Activated T-helper 1 cell treated with anti-CD3 and anti-CD28 coated beads, Interleukin-12 subunit alpha, Interleukin-12 subunit beta, Interleukin-2, Interleukin-4 antibody, amounts not matched to agents 30 ng/mL and 10 ng/mL and 1 ng/mL, durations not matched to agents 14 hours and 24 hours and 36 hours (primary cell): ENCODE measurements at regions of chr12 and their contacts with region 1.

Region 1: GRCh38 chr12:121697098-121697698 is 15.4 kb upstream of the TMEM120B start:
- DNase-seq: peak; percentile 24
- H3K4me3 Mint-ChIP-seq: no peak overlapping the region
- H3K27ac Mint-ChIP-seq: no peak overlapping the region
- H3K4me1 Mint-ChIP-seq: no peaks in the 10 kb centered on the region
- H3K27me3 Mint-ChIP-seq: peaks cover 10% of the 10 kb centered on the region

Region 2: GRCh38 chr12:121600702-121601336 is 96.4 kb before region 1 on chr12:
- intact Hi-C with region 1: no loop called
- DNase-seq: no peak
- H3K4me3 Mint-ChIP-seq: no peak overlapping the region
- H3K27ac Mint-ChIP-seq: no peak overlapping the region
- H3K4me1 Mint-ChIP-seq: no peaks in the 10 kb centered on the region
- H3K27me3 Mint-ChIP-seq: no peaks in the 10 kb centered on the region

Region 3: DNA sequence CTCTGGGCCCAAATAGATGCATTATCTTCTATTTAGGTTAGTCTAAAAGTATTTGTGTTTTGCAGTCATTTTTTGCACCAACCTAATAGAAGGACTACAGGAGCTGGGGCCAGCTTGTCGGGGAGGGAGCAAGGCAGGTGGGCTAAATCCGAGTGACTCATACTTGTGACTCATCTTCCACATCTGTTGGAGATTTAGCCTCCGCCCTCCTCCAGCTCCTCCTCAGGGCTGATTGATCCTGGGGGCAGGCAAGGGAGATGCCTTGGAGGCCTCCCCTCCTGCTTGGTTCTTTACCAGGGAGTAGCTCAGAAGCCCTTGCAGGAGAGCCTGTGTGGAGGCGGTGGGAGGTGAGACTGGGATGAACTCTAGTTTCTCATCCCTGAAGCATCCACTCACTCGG is 68.4 kb after region 1 on chr12:
- intact Hi-C with region 1: no loop called
- DNase-seq: no peak
- H3K4me3 Mint-ChIP-seq: no peak overlapping the region
- H3K27ac Mint-ChIP-seq: no peak overlapping the region
- H3K4me1 Mint-ChIP-seq: no peaks in the 10 kb centered on the region
- H3K27me3 Mint-ChIP-seq: no peaks in the 10 kb centered on the region

Region 4: DNA sequence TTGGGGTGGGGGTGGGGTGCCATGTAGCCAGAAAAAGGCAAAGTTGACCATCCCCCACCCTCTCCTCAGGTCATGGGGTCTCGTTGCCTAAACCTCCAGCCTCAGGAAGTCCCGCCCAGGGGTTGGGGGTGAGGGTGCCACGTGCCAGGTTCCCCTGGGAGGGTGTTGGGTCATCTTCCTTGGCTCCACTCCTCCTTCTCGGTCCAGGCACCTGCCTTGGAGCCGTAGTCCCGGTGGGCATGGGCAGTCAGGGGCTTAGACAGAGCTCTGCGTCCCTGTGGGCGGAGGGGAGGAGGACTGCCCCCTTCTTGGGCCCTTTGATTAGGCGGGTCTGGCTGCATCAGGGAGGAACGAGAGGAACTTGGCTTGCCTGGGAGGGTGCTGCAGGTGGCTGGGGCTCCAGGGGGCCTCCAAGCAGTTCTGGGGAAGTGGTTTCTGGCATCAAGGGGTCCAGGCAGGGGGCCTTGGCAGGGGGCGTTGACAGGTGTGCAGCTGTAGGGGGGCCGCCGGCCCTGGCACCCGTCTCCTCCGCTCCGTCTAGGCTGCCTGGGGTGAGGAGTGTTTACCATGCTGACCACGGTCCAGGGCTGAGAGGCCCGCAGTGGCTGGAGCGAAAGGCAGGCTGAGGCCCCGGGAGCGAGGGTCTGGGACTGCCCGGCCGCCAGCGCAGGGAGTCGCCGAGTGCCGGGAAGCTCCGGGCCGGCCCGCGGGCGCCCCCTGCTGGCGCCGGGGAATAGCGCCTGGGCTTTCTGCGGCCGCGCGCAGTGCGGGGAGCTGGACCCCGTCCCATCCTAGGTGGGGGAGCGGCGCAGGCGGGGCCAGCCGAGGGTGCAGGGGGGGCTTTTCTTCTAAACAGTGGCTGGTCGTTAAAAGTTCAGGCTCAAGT is 114.5 kb after region 1 on chr12:
- intact Hi-C with region 1: loop called (anchors 1 kb)
- DNase-seq: peak; percentile 67
- H3K4me3 Mint-ChIP-seq: peak overlapping the region; percentile 85
- H3K27ac Mint-ChIP-seq: peak overlapping the region; percentile 40
- H3K4me1 Mint-ChIP-seq: peaks cover 35% of the 10 kb centered on the region
- H3K27me3 Mint-ChIP-seq: no peaks in the 10 kb centered on the region

Region 5: GRCh38 chr12:122097927-122098756 is 400.9 kb after region 1 on chr12:
- intact Hi-C with region 1: no loop called
- DNase-seq: no peak
- H3K4me3 Mint-ChIP-seq: no peak overlapping the region
- H3K27ac Mint-ChIP-seq: peak overlapping the region; percentile 40
- H3K4me1 Mint-ChIP-seq: peaks cover 44% of the 10 kb centered on the region
- H3K27me3 Mint-ChIP-seq: no peaks in the 10 kb centered on the region